Ovary (tissue), 10 donors: ENCODE measurements at regions of chr14 and their contacts with region 1.

Region 1: GRCh38 chr14:81170104-81170828 is 50.5 kb downstream of the GTF2A1 start:
- DNase-seq: peak; percentile 90 to 92 (median 91)
- H3K4me3 ChIP-seq: peak overlapping the region; percentile 49
- H3K27ac ChIP-seq: peak overlapping the region; percentile 87 to 93
- H3K4me1 ChIP-seq: no peaks in the 10 kb centered on the region
- H3K27me3 ChIP-seq: no peaks in the 10 kb centered on the region
- CTCF ChIP-seq: peak; percentile 76 to 98 (median 84)
- EP300 ChIP-seq: no peak
- POLR2A ChIP-seq: peak; percentile 84

Region 2: DNA sequence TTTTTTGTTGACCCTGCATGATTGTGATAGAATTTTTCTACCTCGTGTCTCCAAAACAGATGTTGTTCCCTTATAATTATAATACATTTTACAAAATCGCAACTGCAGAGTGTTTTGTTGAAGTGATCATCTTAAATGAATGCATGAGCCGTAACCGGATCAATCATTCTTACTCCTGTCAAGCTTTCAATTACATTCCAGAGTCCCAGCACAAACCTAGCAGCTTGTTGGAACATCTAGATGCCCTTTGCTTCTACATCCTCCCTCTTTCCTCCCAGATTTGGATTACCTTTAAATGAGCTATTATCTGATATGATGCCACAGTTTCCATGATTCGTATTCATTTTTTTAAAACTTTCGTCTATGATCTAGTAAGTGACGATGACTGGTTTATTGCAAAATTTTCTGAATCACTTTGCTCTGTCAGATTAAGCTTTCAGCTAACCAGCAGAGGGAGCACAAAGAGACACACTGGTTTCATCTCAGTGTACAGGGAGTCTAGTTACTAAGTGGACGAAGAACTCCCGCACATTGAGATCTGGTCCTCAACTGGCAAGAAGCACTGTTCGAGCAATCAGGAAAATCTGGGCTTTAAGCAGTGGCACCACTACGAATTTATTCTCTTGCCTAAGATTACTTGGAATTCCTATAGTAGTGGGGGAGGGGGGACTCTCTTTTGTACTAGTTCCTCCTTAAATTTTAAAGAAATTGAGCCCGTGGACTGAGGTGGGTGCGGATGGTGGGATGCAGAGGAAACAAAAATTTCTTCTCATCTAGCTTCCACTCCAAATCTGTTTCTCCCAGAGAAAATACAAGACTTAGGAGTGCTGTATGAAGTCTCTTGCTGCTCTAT is 174.0 kb before region 1 on chr14:
- intact Hi-C with region 1: loop called in 1 of 4 experiments (anchors 10 kb)
- DNase-seq: peak in 3 of 5 donors; percentile 8 to 31 (median 9)
- H3K4me3 ChIP-seq: no peak overlapping the region
- H3K27ac ChIP-seq: no peak overlapping the region
- H3K4me1 ChIP-seq: no peaks in the 10 kb centered on the region
- H3K27me3 ChIP-seq: no peaks in the 10 kb centered on the region
- CTCF ChIP-seq: peak in 2 of 3 donors; percentile 39 to 45
- EP300 ChIP-seq: no peak
- POLR2A ChIP-seq: no peak

Region 3: GRCh38 chr14:81219210-81219758 is 49.0 kb after region 1 on chr14:
- intact Hi-C with region 1: loop called in 1 of 4 experiments (anchors 5 kb)
- DNase-seq: peak; percentile 87 to 95 (median 90)
- H3K4me3 ChIP-seq: peak overlapping the region; percentile 89
- H3K27ac ChIP-seq: peak overlapping the region; percentile 94 to 95
- H3K4me1 ChIP-seq: peaks cover 6% of the 10 kb centered on the region
- H3K27me3 ChIP-seq: no peaks in the 10 kb centered on the region
- CTCF ChIP-seq: no peak
- EP300 ChIP-seq: no peak
- POLR2A ChIP-seq: peak; percentile 98

Region 4: DNA sequence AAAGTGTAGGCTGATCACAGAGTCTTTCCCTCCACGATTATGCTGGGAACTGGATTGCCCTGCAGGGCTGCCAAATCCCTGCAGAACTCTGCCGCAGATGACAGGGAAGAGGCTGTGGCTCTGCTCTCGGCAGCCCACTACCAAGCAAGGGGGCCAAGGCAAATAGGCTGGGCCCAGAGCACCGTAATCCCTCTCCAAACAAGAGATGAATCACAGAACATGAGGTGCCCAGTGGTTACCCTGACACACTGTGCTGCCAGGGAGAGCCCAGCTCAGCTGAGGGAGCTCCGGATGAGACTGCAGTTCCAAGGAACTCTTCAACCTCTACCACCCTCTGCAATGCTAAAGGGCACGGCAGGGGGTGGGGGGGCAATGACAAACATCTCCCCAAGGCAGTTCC is 195.9 kb after region 1 on chr14:
- intact Hi-C with region 1: no loop called
- DNase-seq: no peak
- H3K4me3 ChIP-seq: no peak overlapping the region
- H3K27ac ChIP-seq: no peak overlapping the region
- H3K4me1 ChIP-seq: peaks cover 11% of the 10 kb centered on the region
- H3K27me3 ChIP-seq: no peaks in the 10 kb centered on the region
- CTCF ChIP-seq: no peak
- EP300 ChIP-seq: no peak
- POLR2A ChIP-seq: no peak